PC-9 (cell line): ENCODE measurements at regions of chr21 and their contacts with region 1.

Region 1: DNA sequence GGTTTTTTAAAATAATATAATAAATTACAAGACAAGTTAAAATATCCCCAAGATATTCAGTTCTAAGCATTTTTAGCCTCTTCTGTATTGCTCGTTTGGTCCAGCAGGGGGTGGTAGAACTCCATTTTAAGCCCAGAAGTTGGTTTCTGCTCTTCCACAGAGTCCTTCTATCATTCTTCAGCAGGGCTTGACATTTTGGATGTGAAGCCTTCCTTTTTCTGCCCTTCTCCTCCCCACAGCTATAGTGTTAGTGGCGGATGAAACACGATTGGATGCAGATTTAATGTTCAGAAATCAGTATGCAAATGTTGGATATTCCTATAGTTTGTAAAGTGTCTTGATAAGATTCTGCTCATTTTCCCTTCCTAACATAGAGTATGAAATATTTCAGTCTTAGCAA is 1.4 kb downstream of the NCAM2 start:
- DNase-seq: no peak
- H3K4me3 ChIP-seq: no peak overlapping the region
- H3K27ac ChIP-seq: no peak overlapping the region
- H3K4me1 ChIP-seq: no peaks in the 10 kb centered on the region
- H3K27me3 ChIP-seq: peaks cover 6% of the 10 kb centered on the region; the same call in 1 of the 2 replicates
- CTCF ChIP-seq: peak; percentile 70

Region 2: DNA sequence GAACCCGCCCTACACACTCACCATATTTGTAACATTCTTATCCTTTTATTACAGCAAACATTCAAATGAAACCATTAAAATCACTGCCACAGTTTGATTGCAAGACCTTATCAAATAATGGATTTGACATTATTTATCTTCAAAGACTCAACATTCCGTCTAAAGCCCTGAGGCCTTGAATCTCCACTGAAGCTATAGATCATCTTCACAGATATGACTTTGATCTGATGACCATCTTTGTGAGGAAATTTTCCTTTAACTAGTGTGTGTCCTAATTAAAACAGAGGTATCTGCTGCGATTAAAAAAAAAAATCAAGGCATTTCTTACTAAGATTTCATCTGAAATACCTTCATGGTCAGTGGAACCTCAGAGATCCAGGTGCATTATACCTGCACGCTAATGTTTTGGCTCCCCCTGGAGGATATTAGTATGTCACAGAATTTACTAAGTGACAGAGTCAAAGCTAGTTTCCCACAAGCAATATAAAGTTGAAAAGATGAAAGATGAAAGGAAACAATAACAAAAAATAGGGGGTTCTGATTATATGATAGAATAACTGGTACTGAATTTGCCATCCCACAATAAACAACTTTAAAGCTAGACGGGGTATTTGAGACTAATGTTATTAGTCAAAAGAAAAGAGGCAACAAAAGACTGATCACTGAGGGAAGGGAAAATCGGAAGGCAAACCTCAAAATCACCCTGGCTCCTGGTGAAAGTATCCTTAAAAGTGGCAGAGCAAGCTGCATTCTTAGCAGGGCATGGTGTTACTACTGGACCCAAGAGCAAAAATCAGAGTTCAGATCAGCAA is 922.0 kb after region 1 on chr21:
- CTCF ChIA-PET with region 1: no interaction called
- POLR2A ChIA-PET with region 1: no interaction called
- intact Hi-C with region 1: loop called (anchors 1 kb)
- DNase-seq: no peak
- H3K4me3 ChIP-seq: no peak overlapping the region
- H3K27ac ChIP-seq: no peak overlapping the region
- H3K4me1 ChIP-seq: no peaks in the 10 kb centered on the region
- H3K27me3 ChIP-seq: no peaks in the 10 kb centered on the region
- CTCF ChIP-seq: peak; percentile 69

Region 3: DNA sequence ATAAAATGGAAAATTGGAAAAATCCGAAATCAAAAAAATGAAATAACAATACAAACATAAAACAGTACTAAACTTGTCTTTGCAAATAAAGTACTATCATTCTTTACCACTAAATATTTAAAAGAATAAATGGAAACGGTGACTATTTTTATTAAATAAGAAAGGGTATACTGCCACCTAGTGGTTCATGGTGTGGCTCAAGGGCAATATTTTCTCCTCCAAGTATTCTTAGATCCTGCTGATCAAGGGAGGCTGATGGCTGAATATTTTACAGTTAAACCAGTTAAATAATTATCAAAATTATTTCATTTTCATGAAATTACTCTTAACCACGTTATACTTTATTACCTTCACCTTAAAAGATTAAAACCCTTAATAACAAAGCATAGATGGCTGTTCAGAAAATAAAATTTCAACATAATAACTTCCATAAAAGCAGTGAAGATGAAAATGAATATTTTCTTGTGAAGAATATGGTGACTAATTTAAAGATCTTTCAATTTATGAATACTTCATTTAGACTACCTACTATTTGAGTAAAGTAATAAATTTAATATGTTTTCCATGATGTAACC is 1792.4 kb after region 1 on chr21:
- CTCF ChIA-PET with region 1: no interaction called
- POLR2A ChIA-PET with region 1: no interaction called
- intact Hi-C with region 1: loop called (anchors 10 kb)
- DNase-seq: no peak
- H3K4me3 ChIP-seq: no peak overlapping the region
- H3K27ac ChIP-seq: no peak overlapping the region
- H3K4me1 ChIP-seq: no peaks in the 10 kb centered on the region
- H3K27me3 ChIP-seq: no peaks in the 10 kb centered on the region
- CTCF ChIP-seq: peak; percentile 78

Region 4: GRCh38 chr21:22889445-22889844 is 1889.8 kb after region 1 on chr21:
- CTCF ChIA-PET with region 1: no interaction called
- POLR2A ChIA-PET with region 1: no interaction called
- intact Hi-C with region 1: no loop called
- DNase-seq: no peak
- H3K4me3 ChIP-seq: no peak overlapping the region
- H3K27ac ChIP-seq: no peak overlapping the region
- H3K4me1 ChIP-seq: peaks cover 21% of the 10 kb centered on the region
- H3K27me3 ChIP-seq: no peaks in the 10 kb centered on the region
- CTCF ChIP-seq: no peak